ENCODE measurements at regions of chr9 and their contacts with region 1.

Region 1: GRCh38 chr9:70413798-70414775 is at the start of gene KLF9:
- DNase-seq: peak; percentile 96
- H3K4me3 Mint-ChIP-seq: peak within 1 kb of the TSS; percentile 100
- H3K27ac Mint-ChIP-seq: peak within 1 kb of the TSS; percentile 100
- H3K4me1 Mint-ChIP-seq: peaks cover 39% of the 10 kb centered on the region
- H3K27me3 Mint-ChIP-seq: no peaks in the 10 kb centered on the region
- total RNA-seq, gene KLF9: 44.2 to 45.0 TPM

Region 2: GRCh38 chr9:69168709-69169217 is 1245.3 kb before region 1 on chr9:
- CTCF ChIA-PET with region 1: no interaction called
- intact Hi-C with region 1: loop called (anchors 5 kb)
- DNase-seq: peak; percentile 88
- H3K4me3 Mint-ChIP-seq: peak overlapping the region; percentile 72
- H3K27ac Mint-ChIP-seq: peak overlapping the region; percentile 82
- H3K4me1 Mint-ChIP-seq: peaks cover 20% of the 10 kb centered on the region
- H3K27me3 Mint-ChIP-seq: peaks cover 26% of the 10 kb centered on the region

Region 3: DNA sequence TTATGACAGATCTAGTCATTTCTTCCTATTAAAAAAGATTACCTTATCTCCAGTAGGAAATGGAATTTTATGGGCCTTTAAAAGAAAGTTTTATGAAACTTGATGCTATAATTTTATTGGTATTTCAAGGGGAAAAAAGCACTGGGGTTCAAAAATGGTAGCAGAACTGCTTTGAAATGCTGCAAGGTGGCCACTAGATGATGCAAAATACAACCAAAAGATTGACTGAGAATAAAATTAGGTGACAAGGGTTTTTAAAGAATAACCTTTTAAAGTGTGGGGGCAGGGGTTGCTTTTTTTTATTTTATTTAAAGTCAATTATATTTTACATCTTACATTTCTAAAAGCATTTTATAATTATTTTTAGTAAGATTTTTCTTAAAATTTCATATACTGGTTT is 61.3 kb before region 1 on chr9:
- CTCF ChIA-PET with region 1: no interaction called
- intact Hi-C with region 1: loop called (anchors 2 kb)
- DNase-seq: no peak
- H3K4me3 Mint-ChIP-seq: no peak overlapping the region
- H3K27ac Mint-ChIP-seq: no peak overlapping the region
- H3K4me1 Mint-ChIP-seq: no peaks in the 10 kb centered on the region
- H3K27me3 Mint-ChIP-seq: no peaks in the 10 kb centered on the region

Region 4: DNA sequence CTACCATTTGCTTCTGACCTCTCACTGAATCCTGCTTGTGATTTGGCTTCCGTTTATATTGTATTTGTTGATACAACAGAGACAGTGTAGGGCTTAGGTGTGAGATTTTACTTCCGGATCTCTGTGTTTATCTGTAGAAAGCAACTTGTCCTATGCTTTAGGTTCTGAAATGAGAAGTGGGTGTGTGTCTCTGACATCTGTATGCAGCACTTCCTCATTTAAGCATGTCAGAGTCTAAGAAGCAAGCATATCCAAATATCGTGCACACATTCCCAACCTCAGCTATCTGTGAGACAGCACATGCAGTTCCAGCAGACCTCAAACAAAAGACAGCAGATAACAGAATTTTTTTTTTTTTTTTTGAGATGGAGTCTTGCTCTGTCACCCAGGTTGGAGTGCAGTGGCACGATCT is 15.9 kb before region 1 on chr9:
- CTCF ChIA-PET with region 1: interaction called, 3 read pairs
- intact Hi-C with region 1: loop called (anchors 1 kb)
- DNase-seq: no peak
- H3K4me3 Mint-ChIP-seq: peak overlapping the region; percentile 35
- H3K27ac Mint-ChIP-seq: peak overlapping the region; percentile 68
- H3K4me1 Mint-ChIP-seq: peaks cover 78% of the 10 kb centered on the region
- H3K27me3 Mint-ChIP-seq: no peaks in the 10 kb centered on the region

Region 5: GRCh38 chr9:70484210-70485130 is 70.4 kb after region 1 on chr9:
- CTCF ChIA-PET with region 1: interaction called, 4 read pairs
- intact Hi-C with region 1: loop called (anchors 2 kb)
- DNase-seq: no peak
- H3K4me3 Mint-ChIP-seq: no peak overlapping the region
- H3K27ac Mint-ChIP-seq: no peak overlapping the region
- H3K4me1 Mint-ChIP-seq: peaks cover 17% of the 10 kb centered on the region
- H3K27me3 Mint-ChIP-seq: no peaks in the 10 kb centered on the region

Measured in activated naive CD4-positive, alpha-beta T cell treated with anti-CD3 and anti-CD28 coated beads for 36 hours (primary cell).